ENCODE measurements at regions of chr2 and their contacts with region 1.

Region 1: DNA sequence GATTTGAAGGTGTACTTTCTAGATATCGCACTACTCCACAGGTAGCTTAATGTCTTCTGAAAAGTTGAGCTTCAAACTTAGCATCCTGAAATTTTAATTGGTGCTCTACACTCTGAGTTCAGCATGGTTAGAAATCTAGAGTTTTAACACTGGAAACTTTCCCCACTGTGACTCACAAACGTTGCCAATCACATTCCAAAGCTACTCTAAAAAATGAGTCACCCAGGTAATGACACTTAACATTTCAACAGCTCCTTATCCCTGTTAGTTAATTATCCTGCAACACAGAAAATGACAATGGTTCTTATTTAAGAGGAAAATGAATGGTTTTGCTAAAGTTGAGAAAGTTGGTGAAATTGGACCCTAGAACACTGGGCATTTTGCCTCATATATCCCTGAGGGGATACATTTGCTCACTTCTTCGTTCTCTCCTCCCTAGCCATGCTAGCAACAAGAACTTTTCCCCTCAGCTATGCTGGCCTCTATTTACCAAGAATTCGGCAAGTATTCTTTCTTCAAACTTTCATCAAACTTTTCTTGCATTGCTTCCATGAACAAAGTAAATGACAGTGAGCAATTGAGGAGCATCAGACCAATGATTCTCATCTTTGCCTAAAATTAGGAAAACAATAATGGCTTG is 1024.1 kb upstream of the KLHL29 start:
- DNase-seq: no peak
- ATAC-seq: no peak
- H3K4me3 ChIP-seq: no peak overlapping the region
- H3K27ac ChIP-seq: no peak overlapping the region
- H3K4me1 ChIP-seq: no peaks in the 10 kb centered on the region
- H3K27me3 ChIP-seq: no peaks in the 10 kb centered on the region
- CTCF ChIP-seq: no peak
- POLR2A ChIP-seq: no peak
- RAD21 ChIP-seq: no peak

Region 2: GRCh38 chr2:22756276-22757043 is 395.6 kb after region 1 on chr2:
- CTCF ChIA-PET with region 1: no interaction called
- POLR2A ChIA-PET with region 1: no interaction called
- dilution Hi-C with region 1: no loop called
- in situ Hi-C with region 1: no loop called
- intact Hi-C with region 1: no loop called
- DNase-seq: no peak
- ATAC-seq: no peak
- H3K4me3 ChIP-seq: no peak overlapping the region
- H3K27ac ChIP-seq: no peak overlapping the region
- H3K4me1 ChIP-seq: no peaks in the 10 kb centered on the region
- H3K27me3 ChIP-seq: no peaks in the 10 kb centered on the region
- CTCF ChIP-seq: no peak
- POLR2A ChIP-seq: no peak
- RAD21 ChIP-seq: no peak

Region 3: GRCh38 chr2:23366720-23367119 is 1005.9 kb after region 1 on chr2:
- CTCF ChIA-PET with region 1: no interaction called
- POLR2A ChIA-PET with region 1: no interaction called
- dilution Hi-C with region 1: no loop called
- in situ Hi-C with region 1: no loop called
- intact Hi-C with region 1: loop called (anchors 5 kb)
- DNase-seq: no peak
- ATAC-seq: no peak
- H3K4me3 ChIP-seq: no peak overlapping the region
- H3K27ac ChIP-seq: no peak overlapping the region
- H3K4me1 ChIP-seq: no peaks in the 10 kb centered on the region; the same call in 1 of the 2 replicates
- H3K27me3 ChIP-seq: peaks cover 11% of the 10 kb centered on the region
- CTCF ChIP-seq: no peak
- POLR2A ChIP-seq: no peak
- RAD21 ChIP-seq: no peak

Measured in IMR-90 (cell line).